ENCODE measurements at regions of chr12 and their contacts with region 1.

Region 1: GRCh38 chr12:54191550-54192022 is 2.8 kb upstream of the SMUG1 start:
- DNase-seq: peak; percentile 64
- H3K4me3 Mint-ChIP-seq: no peak overlapping the region
- H3K27ac Mint-ChIP-seq: no peak overlapping the region
- H3K4me1 Mint-ChIP-seq: peaks cover 32% of the 10 kb centered on the region
- H3K27me3 Mint-ChIP-seq: peaks cover 43% of the 10 kb centered on the region

Region 2: GRCh38 chr12:54082397-54082892 is 109.1 kb before region 1 on chr12:
- intact Hi-C with region 1: loop called (anchors 1 kb)
- DNase-seq: peak; percentile 11
- H3K4me3 Mint-ChIP-seq: peak overlapping the region; percentile 87
- H3K27ac Mint-ChIP-seq: peak overlapping the region; percentile 92
- H3K4me1 Mint-ChIP-seq: peaks cover 29% of the 10 kb centered on the region
- H3K27me3 Mint-ChIP-seq: peaks cover 23% of the 10 kb centered on the region

Region 3: DNA sequence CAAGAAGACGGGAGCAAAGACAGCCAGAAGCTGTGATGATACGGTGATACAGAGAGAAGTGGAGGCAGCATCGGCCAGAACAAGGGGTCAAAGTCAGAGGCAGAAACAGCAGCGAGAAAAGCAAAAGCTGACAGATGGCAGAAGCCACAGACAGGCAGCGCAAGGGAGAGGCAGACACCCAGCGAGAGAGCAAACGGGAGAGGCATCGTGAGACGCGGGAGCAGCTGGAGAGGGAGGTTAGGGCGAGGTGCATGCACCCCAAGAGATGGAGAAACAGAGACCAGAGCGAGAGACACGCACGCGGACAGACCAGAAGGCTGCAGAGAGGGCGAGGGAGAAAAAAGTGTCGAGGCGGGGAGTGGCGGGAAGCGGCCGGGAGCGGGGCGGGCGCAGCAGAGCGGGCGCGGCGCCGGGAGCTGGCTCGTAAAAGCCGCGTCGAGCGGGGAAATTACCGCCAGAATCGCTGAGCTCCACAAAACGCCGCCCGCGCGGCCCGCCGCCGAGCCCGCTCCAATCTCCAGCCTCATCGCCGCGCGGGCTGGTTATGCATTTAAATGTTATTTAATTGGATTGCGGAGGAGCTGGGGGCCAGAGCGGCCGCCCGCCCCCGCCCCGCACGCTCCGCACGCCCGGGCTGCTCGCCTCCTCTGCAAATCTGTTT is 18.4 kb before region 1 on chr12:
- intact Hi-C with region 1: loop called (anchors 1 kb)
- DNase-seq: peak; percentile 15
- H3K4me3 Mint-ChIP-seq: no peak overlapping the region
- H3K27ac Mint-ChIP-seq: no peak overlapping the region
- H3K4me1 Mint-ChIP-seq: peaks cover 5% of the 10 kb centered on the region
- H3K27me3 Mint-ChIP-seq: no peaks in the 10 kb centered on the region

Region 4: GRCh38 chr12:54214553-54215406 is 23.2 kb after region 1 on chr12:
- intact Hi-C with region 1: loop called (anchors 1 kb)
- DNase-seq: peak; percentile 86
- H3K4me3 Mint-ChIP-seq: peak overlapping the region; percentile 72
- H3K27ac Mint-ChIP-seq: no peak overlapping the region
- H3K4me1 Mint-ChIP-seq: peaks cover 19% of the 10 kb centered on the region
- H3K27me3 Mint-ChIP-seq: peaks cover 13% of the 10 kb centered on the region